ENCODE measurements at regions of chr16 and their contacts with region 1.

Region 1: GRCh38 chr16:5604770-5605169 is 507.2 kb upstream of the EEF2KMT start:
- DNase-seq: no peak
- H3K4me3 ChIP-seq: no peak overlapping the region
- H3K27ac ChIP-seq: no peak overlapping the region
- H3K4me1 ChIP-seq: no peaks in the 10 kb centered on the region
- H3K27me3 ChIP-seq: no peaks in the 10 kb centered on the region
- CTCF ChIP-seq: peak in 4 of 6 experiments; percentile 5 to 43 (median 23)
- POLR2A ChIP-seq: no peak

Region 2: GRCh38 chr16:5235119-5235518 is 369.7 kb before region 1 on chr16:
- intact Hi-C with region 1: loop called (anchors 5 kb)
- DNase-seq: no peak
- H3K4me3 ChIP-seq: no peak overlapping the region
- H3K27ac ChIP-seq: no peak overlapping the region
- H3K4me1 ChIP-seq: peaks cover 0 to 5% (median 3%) of the 10 kb centered on the region in 3 donors
- H3K27me3 ChIP-seq: peaks cover 0 to 25% (median 0%) of the 10 kb centered on the region in 4 donors
- CTCF ChIP-seq: no peak
- POLR2A ChIP-seq: no peak

Region 3: GRCh38 chr16:5502467-5502869 is 102.3 kb before region 1 on chr16:
- intact Hi-C with region 1: loop called (anchors 10 kb)
- DNase-seq: no peak
- H3K4me3 ChIP-seq: no peak overlapping the region
- H3K27ac ChIP-seq: no peak overlapping the region
- H3K4me1 ChIP-seq: peaks cover 0 to 7% (median 0%) of the 10 kb centered on the region in 3 donors
- H3K27me3 ChIP-seq: peaks cover 0 to 25% (median 0%) of the 10 kb centered on the region in 4 donors
- CTCF ChIP-seq: peak in 4 of 6 experiments; percentile 23 to 45 (median 32)
- POLR2A ChIP-seq: no peak